Breast epithelium (tissue), 4 donors: ENCODE measurements at regions of chr7 and their contacts with region 1.

Region 1: DNA sequence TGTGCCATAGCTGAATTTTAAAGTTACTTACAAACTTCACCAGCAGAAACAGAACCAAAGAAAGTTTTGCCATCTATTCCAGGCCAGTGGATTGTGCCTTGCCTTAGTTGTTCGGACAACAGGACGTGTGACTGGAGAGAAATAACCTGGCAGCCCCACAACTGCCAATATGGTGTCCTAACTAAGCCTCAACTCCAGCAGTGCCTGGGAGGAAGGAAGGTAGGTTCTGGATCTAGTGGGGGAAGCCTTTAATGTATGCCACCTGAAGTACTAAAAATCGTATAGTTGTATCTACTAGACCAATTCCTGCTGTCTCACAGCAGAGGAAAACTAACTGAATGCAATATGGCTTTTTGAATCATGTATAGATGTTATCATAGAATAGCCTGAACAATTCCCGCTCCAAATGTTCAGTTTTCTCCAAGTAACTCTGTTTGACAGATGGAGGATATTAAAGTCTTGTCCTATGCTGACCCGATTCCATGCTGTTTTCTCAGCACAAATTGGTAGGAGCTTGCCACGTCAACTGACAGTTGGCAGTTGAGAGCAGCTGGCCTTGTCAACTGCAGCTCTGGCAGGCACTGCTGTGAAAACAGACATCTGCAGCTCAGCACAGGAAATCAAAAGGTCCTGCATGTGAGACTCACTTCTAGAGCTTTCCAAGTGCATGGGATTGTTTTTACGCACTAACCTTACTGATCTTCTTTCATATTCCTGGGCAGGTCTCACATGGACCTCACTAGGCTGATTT is 84.5 kb upstream of the WNT16 start:
- DNase-seq: no peak
- H3K4me3 ChIP-seq: no peak overlapping the region
- H3K27ac ChIP-seq: no peak overlapping the region
- H3K4me1 ChIP-seq: no peaks in the 10 kb centered on the region
- H3K27me3 ChIP-seq: no peaks in the 10 kb centered on the region
- CTCF ChIP-seq: no peak
- POLR2A ChIP-seq: no peak

Region 2: DNA sequence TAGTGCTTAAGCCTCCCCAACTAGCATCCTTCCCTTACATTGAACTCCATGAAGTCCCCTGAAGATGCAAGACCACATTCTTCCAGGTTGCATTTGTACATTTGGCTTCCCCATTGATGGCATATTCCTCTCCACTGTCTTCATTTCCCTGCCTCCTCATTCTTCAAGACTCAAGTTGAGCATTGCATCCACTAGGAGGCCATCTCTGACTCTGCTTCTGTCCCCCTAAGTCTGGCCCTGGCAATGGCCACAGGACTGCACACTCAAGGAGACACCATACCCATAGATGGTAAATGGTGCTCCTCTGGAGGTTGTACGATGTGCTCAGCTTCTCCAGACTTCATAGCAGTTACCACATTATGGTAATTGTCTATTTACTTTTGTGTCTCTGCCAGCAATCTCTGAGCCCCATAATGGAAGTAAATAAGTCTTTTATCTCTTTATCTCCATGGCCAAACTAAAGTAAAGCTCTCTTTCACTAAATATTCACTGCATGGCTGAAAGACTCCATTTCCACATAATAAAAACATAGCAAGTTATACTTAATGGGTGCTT is 741.3 kb after region 1 on chr7:
- intact Hi-C with region 1: loop called (anchors 5 kb)
- DNase-seq: no peak
- H3K4me3 ChIP-seq: no peak overlapping the region
- H3K27ac ChIP-seq: no peak overlapping the region
- H3K4me1 ChIP-seq: no peaks in the 10 kb centered on the region
- H3K27me3 ChIP-seq: no peaks in the 10 kb centered on the region
- CTCF ChIP-seq: no peak
- POLR2A ChIP-seq: no peak